PC-3 (cell line): ENCODE measurements at regions of chr3 and their contacts with region 1.

Region 1: DNA sequence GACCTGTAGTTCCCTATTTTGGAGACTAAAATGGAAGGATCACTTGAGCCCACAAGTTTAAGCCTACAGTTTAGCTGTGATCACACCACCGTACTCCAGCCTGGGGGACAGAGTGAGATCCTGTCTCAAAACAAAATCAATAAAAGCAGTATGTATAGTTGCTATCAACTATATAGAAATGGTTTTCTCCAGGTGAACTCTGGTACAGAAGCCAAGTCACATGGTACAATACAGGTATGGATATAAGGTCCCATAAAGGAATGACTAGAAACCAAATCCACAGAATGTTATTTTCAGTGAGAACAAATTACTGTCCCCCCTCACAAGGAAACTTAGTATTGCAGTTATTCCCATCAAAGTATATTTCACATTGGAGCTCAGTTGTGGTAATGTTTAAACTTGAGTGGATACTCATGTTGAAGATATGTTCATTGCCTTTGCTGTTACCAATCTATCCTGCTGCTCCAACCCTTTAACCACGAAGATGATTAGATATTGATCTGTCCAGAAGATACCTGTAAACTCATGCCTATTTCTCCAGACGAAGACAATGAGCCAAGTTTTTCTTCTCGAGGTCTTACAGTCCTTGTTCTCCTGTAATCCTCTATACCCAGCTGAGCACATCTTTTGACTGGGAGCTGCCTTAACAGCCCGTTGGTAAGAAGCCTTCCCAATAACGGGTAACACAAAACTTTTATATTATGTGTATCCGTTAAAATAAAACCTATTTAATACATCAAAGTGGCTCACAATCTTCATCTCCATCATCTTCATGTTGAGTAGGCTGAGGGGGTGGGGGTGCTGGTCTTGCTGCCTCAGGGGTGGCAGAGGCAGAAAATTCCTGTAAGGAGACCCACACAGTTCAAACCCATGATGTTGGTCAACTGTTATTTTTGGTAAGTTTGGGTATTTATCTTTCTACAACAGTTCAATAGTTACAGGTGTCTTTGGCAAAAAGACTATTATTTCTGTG is 24.6 kb downstream of the TRA2B start:
- DNase-seq: peak; percentile 18
- ATAC-seq: no peak
- H3K4me3 ChIP-seq: no peak overlapping the region
- H3K27ac ChIP-seq: no peak overlapping the region
- H3K4me1 ChIP-seq: no peaks in the 10 kb centered on the region
- H3K27me3 ChIP-seq: no peaks in the 10 kb centered on the region
- CTCF ChIP-seq: no peak

Region 2: DNA sequence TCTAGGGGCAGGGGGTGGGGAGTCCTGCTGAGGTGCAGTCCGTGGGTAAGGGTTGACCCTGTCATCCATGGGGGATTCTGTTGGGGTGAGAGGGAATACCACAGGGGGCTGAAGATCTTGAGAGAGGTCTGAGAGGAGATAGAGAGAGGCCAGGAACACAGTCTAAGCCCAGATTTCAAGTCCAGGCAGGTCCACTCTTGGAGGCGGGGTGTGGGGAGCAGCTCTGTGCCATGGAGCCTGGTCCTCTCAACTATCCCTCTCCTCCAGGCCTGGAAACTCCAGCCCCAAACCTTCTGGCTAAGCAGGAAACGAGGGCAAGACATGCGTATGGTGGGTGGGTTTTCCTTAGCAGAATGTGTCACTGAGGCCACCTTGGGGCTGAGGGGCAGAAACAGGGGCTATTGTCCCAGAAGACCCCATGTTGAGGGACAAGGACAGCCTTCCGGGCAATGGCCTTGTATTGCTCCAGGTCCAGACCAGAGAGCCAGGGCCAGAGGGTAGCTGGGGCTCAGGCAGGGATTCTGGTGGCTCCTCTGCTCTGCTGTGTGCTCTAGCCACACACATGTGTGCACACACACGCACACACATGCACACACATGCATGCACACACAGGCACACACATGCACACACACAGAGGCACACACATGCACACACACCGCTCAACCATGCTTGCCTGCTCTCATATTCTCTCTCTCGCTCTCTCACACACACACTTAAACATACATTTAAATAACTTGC is 1152.7 kb before region 1 on chr3:
- CTCF ChIA-PET with region 1: no interaction called
- POLR2A ChIA-PET with region 1: interaction called, 14 read pairs
- intact Hi-C with region 1: no loop called
- DNase-seq: no peak
- ATAC-seq: no peak
- H3K4me3 ChIP-seq: no peak overlapping the region
- H3K27ac ChIP-seq: no peak overlapping the region
- H3K4me1 ChIP-seq: peaks cover 10% of the 10 kb centered on the region
- H3K27me3 ChIP-seq: no peaks in the 10 kb centered on the region
- CTCF ChIP-seq: no peak

Region 3: DNA sequence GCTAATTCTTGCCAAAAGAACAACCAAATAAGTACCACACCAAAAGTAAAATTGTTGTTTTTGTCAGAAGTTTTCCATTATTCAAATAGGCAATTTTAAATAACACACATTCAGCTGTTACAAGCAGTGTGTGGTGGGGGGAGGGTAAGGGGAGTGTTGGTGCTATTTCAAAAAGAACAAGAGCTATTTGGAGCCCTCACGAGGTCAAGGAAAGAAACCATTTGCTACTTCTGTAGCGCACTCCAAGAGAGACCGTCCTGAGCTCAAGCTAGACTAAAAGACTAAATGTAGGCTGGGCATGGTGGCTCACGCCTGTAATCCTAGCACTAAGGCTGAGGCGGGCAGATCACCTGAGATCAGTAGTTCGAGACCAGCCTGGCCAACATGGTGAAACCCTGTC is 67.2 kb before region 1 on chr3:
- CTCF ChIA-PET with region 1: no interaction called
- POLR2A ChIA-PET with region 1: interaction called, 13 read pairs
- intact Hi-C with region 1: no loop called
- DNase-seq: no peak
- ATAC-seq: no peak
- H3K4me3 ChIP-seq: no peak overlapping the region
- H3K27ac ChIP-seq: no peak overlapping the region
- H3K4me1 ChIP-seq: no peaks in the 10 kb centered on the region
- H3K27me3 ChIP-seq: no peaks in the 10 kb centered on the region
- CTCF ChIP-seq: no peak

Region 4: DNA sequence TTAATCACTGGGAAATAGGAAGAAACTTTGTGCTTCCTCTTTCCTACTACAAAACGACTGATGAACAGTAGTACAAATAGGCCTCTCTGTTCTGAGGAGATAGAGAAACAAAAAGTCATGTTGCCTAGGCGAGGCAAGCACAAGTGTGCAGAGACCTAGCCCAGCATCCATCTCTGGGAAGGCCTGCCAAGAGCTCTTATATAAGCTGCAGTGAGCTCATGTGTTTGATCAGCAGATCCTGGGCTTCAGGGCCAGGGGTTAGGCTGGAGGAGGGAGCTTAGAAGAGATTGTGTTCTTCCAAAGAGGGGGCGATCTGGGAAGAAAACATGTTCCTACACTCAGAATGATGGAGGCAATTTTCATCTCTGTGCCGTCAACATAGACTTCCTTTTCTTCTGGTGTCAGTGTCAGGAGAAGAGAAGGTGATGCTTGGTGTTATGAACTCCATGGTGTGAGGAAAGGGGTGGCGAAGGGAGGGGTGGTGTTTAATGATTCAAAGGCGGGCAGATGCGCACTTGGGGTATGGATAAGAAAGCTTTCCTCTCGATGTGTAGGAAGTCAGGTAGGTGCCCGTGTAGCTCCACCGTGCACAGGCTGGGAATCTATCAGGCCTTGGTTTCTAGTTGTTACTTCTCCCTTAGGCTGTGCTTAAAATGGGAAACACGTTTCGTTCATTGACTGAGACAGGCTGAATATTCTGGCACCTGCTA is 225.2 kb after region 1 on chr3:
- CTCF ChIA-PET with region 1: no interaction called
- POLR2A ChIA-PET with region 1: no interaction called
- intact Hi-C with region 1: no loop called
- DNase-seq: no peak
- ATAC-seq: no peak
- H3K4me3 ChIP-seq: no peak overlapping the region
- H3K27ac ChIP-seq: no peak overlapping the region
- H3K4me1 ChIP-seq: no peaks in the 10 kb centered on the region
- H3K27me3 ChIP-seq: peaks cover 39% of the 10 kb centered on the region
- CTCF ChIP-seq: no peak